Left ventricle myocardium superior (tissue), 1 donor: ENCODE measurements at regions of chr9 and their contacts with region 1.

Region 1: GRCh38 chr9:7549249-7549648 is 250.3 kb downstream of the DMAC1 start:
- DNase-seq: peak; percentile 47
- ATAC-seq: peak; percentile 52

Region 2: GRCh38 chr9:7336356-7337065 is 212.7 kb before region 1 on chr9:
- intact Hi-C with region 1: loop called (anchors 10 kb)
- DNase-seq: no peak
- ATAC-seq: peak; percentile 98

Region 3: DNA sequence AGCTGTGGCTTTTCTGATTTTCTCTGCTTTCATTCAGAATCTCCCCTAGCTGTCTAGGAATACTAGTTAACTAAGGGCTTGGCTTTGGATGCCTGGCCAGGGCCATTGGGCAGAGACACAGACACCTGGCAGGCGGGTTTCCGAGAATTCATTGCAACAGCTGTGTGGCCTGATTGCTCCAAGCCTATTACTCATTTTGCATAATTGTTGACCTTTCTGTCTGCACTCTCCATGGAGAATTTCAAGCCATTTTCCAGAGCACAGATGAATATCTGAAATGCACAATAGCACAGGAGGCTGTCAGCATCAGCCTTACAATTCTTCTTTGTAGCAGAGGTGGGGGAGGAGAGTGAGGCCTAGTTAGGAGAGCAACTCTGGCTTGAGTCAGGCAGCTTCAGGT is 60.2 kb before region 1 on chr9:
- intact Hi-C with region 1: no loop called
- DNase-seq: peak; percentile 67
- ATAC-seq: peak; percentile 96